Calu3 (cell line): ENCODE measurements at regions of chr3 and their contacts with region 1.

Region 1: DNA sequence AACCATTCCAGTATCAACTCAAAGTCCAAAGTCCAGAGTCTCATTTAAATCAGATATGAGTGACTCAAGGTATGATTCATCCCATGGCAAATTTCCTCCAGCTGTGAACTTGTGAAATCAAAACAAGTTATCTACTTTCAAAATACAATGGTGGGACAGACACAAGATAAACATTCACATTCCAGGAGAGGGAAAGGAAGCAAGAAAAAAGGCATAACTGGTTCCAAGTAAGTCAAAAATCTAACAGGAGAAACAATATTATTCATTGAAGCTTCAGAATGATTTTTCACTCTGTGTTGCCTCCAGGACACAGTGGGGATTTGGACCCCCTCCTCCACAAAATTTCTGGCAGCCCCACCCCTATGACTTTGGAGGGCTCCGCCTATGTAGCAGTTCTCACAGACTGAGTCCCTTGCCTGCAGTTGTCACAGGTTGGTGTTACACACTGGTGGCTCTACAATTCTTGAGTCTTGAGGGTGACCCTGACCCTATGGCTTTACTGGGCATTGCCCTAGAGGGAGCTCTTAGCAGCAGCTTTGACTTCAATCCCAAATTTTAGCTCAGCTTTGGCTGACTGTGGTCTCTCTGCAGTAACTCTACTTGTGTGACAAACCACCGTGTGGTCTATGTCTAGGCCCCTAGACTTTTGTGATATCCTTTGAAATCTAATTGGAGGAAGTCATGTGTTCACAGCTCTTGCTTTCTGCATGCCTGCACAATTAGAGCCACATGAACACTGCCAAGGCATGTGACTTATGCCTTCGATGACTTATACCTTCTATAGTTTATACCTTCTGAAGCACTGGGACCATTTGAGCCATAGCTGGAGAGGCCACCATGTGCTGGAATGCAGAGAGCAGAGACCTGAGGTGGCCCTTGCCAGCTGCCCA is 644.2 kb downstream of the GRM7 start:
- DNase-seq: peak; percentile 74
- H3K4me3 Mint-ChIP-seq: peak overlapping the region; percentile 21
- H3K27ac Mint-ChIP-seq: peak overlapping the region; percentile 96
- H3K4me1 Mint-ChIP-seq: peaks cover 60% of the 10 kb centered on the region
- H3K27me3 Mint-ChIP-seq: no peaks in the 10 kb centered on the region
- CTCF ChIP-seq: no peak

Region 2: DNA sequence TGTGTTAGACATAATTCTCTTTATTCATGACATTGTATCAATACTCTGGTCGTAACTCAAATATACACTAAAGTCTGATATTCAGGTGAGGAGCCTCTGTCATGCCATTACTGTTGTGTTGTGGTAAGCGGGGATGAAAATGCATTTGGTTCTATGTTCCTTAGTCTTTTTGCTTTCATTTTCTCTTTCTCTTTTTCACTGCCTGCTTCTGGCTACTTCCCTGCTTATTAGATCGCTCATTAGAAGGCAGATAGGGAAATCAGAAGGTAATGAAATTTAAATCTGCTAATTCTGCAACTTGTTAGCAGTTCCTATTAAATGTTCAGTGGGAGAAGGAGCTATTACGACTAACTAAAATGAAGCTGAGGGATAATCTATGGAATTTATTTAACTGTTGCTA is 299.2 kb before region 1 on chr3:
- CTCF ChIA-PET with region 1: no interaction called
- intact Hi-C with region 1: loop called (anchors 10 kb)
- DNase-seq: no peak
- H3K4me3 Mint-ChIP-seq: peak overlapping the region; percentile 61
- H3K27ac Mint-ChIP-seq: peak overlapping the region; percentile 86
- H3K4me1 Mint-ChIP-seq: peaks cover 38% of the 10 kb centered on the region
- H3K27me3 Mint-ChIP-seq: no peaks in the 10 kb centered on the region
- CTCF ChIP-seq: no peak

Region 3: DNA sequence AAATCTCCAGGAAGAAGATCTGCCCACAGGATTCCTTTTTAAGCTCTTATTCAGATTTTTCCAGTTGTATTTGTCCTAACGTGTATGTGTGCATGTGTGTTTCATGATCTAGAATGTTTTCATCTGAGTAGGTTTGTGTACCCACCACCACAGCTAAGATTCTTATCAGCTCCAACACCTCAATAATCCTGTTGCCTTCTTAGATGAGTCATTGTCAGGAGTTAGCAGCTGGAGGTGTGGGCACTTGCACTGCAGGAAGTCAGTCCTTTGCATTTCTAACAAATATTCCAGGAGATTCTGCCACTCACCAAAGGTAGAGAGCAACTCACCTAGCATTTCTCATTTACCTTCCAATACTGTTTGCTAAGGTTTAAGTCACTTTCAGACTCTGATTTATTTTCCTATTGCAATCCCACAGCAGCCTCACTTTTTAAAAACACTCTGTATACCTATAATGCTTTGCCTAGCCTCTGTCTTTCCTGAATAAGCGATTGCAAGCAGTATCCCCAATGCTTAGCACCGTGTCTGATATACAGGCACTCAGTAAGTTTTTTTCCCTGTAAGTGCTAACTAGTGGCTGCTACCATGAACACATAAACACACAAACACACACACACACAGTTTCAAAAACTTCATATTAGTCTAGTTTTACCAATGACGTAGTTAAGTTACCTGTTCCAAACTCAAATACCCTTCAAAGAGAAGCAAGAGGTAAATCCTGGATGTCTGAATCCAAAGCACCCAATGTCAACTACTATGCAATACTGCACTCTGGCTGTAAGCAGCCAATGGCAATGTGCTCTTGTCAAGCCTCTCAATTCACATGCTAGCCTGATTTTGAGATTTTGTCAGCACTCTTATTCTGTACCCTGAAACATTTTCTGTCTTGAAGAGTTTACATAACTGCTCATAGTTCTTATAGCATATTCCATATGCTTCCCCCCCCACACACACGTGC is 283.0 kb after region 1 on chr3:
- CTCF ChIA-PET with region 1: no interaction called
- intact Hi-C with region 1: loop called (anchors 5 kb)
- DNase-seq: peak; percentile 26
- H3K4me3 Mint-ChIP-seq: no peak overlapping the region
- H3K27ac Mint-ChIP-seq: peak overlapping the region; percentile 76
- H3K4me1 Mint-ChIP-seq: peaks cover 29% of the 10 kb centered on the region
- H3K27me3 Mint-ChIP-seq: no peaks in the 10 kb centered on the region
- CTCF ChIP-seq: no peak

Region 4: DNA sequence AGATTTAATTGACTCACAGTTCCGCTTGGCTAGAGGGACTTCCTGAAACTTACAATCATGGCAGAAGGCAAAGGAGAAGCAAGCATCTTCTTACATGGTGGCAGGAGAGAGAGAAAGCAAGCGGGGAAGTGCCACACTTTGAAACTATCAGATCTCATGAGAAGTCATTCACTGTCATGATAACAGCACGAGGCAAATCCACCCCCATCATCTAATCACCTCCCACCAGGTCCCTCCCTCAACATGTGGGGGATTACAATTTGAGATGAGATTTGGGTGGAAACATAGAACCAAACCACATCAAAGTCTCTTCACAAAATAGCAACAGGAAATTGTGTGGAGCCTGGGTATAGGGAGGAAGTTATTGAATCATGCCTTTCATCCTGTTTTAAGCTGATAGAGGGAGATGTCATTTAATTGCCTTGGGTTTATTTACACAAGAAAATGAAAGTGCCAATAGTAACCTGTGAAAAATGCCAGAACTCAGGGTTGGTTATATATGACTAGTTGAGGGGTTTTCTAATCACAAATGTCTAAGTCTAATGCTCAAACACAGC is 371.7 kb after region 1 on chr3:
- CTCF ChIA-PET with region 1: no interaction called
- intact Hi-C with region 1: loop called (anchors 5 kb)
- DNase-seq: peak; percentile 2
- H3K4me3 Mint-ChIP-seq: no peak overlapping the region
- H3K27ac Mint-ChIP-seq: peak overlapping the region; percentile 70
- H3K4me1 Mint-ChIP-seq: peaks cover 32% of the 10 kb centered on the region
- H3K27me3 Mint-ChIP-seq: no peaks in the 10 kb centered on the region
- CTCF ChIP-seq: no peak